A549 (cell line): ENCODE measurements at regions of chr15 and their contacts with region 1.

Region 1: GRCh38 chr15:31128919-31129768 is 27.6 kb upstream of the TRPM1 start:
- DNase-seq: peak; percentile 55 to 62
- ATAC-seq: peak; percentile 90 to 94
- H3K4me3 ChIP-seq: peak overlapping the region; percentile 22; the same call in 1 of the 3 replicates
- H3K27ac ChIP-seq: no peak overlapping the region
- H3K4me1 ChIP-seq: 0 out of 3 replicates have a peak, but pooled peaks cover 3% of the 10 kb centered on the region
- CTCF ChIP-seq: peak; percentile 97
- EP300 ChIP-seq: no peak
- POLR2A ChIP-seq: no peak
- RAD21 ChIP-seq: peak; percentile 96 to 97

Region 2: GRCh38 chr15:30859091-30859874 is 269.9 kb before region 1 on chr15:
- CTCF ChIA-PET with region 1: interaction called, 15 read pairs
- POLR2A ChIA-PET with region 1: no interaction called
- DNase-seq: peak; percentile 41 to 42
- ATAC-seq: peak; percentile 81 to 86
- H3K4me3 ChIP-seq: no peak overlapping the region
- H3K27ac ChIP-seq: no peak overlapping the region
- H3K4me1 ChIP-seq: no peaks in the 10 kb centered on the region
- CTCF ChIP-seq: peak; percentile 71
- EP300 ChIP-seq: no peak
- POLR2A ChIP-seq: no peak
- RAD21 ChIP-seq: peak; percentile 56 to 57

Region 3: DNA sequence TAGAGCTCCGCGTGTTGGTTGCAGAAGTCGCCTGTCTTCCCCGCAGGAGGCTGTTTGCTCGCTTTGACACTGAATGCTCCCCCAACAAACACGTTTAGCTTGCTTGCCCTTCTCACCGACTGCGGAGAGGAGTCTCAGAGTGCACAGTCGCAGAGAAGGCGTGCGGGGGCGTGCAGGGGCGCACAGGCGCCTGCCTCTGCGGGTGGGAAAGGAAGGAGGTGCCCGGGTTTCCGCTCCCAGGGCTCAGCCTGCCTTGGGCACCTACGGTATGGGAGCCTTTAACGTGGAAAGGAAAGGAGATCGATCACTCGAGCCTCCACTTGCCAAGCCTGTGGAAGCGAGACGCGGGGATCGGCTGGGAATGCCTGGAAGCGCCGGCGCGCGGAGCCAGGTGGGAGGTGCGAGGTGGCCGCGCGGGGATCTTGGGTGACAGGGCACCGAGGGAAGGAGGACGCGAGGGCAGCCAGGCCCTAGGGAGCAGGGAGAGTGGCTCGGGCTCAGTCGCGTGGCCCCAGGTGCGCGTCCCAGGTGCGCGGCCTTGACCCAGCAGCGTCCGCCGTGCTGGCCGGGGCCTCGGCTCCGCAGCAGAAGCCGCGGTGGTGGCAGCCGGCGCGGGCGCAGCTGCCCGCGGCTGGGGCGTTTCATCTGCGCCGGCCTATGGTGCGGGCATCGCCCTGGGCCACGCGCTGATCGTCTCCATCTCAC is 225.5 kb before region 1 on chr15 and contains the start of gene FAN1:
- CTCF ChIA-PET with region 1: interaction called, 15 read pairs
- POLR2A ChIA-PET with region 1: interaction called, 3 read pairs
- DNase-seq: peak; percentile 92 to 94
- ATAC-seq: peak; percentile 98 to 99
- H3K4me3 ChIP-seq: peak within 1 kb of the TSS; percentile 62
- H3K27ac ChIP-seq: peak within 1 kb of the TSS; percentile 81 to 93
- H3K4me1 ChIP-seq: peaks cover 5% of the 10 kb centered on the region; the same call in 1 of the 3 replicates
- CTCF ChIP-seq: no peak
- EP300 ChIP-seq: no peak
- POLR2A ChIP-seq: peak; percentile 84
- RAD21 ChIP-seq: peak; percentile 13 to 41; a peak in 2 of 5 replicates
- polyA plus RNA-seq, gene FAN1: 22.1 and 22.2 TPM in 2 replicates

Region 4: DNA sequence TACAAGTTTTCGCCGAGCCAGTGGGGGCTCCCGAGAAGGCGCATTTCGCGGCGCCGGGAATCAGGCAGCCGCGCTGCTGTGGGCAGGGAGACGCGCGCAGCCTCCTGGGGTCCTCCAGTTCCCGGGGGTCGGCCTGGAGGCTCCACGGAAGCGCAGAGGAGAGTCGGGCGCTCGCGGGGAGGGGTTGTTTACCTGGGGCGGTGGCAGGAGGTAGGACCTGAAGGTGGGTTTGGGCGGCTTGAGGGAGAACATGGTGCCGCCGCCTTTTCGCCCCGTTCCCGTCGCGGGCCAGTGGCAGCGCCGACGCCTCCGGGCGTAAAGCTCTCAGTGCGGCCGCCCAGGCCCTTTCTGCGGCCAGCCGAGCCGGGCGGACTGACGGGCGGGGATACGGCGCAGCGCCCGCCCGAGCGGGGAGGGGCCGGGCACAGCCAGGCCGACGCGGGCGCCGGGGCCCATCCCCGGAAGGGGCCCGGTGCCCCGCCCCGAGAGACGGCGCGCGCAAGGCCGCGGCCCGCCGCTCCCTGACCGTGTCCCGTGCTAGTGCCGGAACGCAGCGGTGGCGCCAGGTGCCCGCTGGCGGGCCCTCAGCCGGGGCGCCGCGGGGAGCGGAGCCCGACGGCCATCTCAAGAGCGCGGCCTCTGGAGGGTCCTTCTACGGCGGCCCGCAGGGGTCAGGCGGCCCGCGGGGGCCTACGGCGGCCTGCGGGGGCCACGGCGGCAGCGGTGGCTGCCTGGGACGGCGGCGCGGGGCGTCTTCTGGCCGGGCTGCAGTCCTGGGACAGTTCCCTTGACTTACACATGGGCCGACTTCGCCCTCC is 137.7 kb before region 1 on chr15 and contains the start of gene MTMR10:
- CTCF ChIA-PET with region 1: interaction called, 8 read pairs
- POLR2A ChIA-PET with region 1: interaction called, 17 read pairs
- DNase-seq: peak; percentile 77 to 82
- ATAC-seq: peak; percentile 92 to 95
- H3K4me3 ChIP-seq: peak within 1 kb of the TSS; percentile 78
- H3K27ac ChIP-seq: peak within 1 kb of the TSS; percentile 93 to 96
- H3K4me1 ChIP-seq: peaks cover 30% of the 10 kb centered on the region
- CTCF ChIP-seq: no peak
- EP300 ChIP-seq: no peak
- POLR2A ChIP-seq: peak; percentile 84
- RAD21 ChIP-seq: peak in 1 of 2 experiments; percentile 17; a peak in 2 of 5 replicates
- polyA plus RNA-seq, gene MTMR10: 19.3 and 23.1 TPM in 2 replicates

Region 5: DNA sequence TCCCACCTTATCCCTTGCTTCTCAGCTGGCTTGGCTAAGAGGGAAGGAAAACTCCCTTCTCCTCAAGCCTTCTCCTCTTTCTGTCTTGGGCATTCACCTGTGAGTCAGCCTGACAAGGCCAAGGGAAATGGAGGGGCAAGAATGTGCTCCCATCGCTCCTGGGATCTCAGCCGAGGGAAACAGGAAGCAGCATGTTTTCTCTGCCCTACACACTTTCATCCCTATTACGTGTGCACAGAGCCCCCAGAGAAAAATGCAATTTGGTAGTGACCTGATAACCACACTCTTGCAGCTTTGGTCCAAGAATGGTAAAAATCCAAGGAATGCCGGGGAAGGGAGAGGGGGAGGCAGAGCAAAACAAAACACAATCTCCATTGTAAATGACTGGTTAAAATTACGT is 104.8 kb before region 1 on chr15:
- CTCF ChIA-PET with region 1: interaction called, 11 read pairs
- POLR2A ChIA-PET with region 1: no interaction called
- DNase-seq: peak; percentile 68 to 75
- ATAC-seq: peak; percentile 79 to 89; a peak in 5 of 6 replicates
- H3K4me3 ChIP-seq: no peak overlapping the region
- H3K27ac ChIP-seq: peak overlapping the region; percentile 33 to 67
- H3K4me1 ChIP-seq: peaks cover 18% of the 10 kb centered on the region
- CTCF ChIP-seq: no peak
- EP300 ChIP-seq: no peak
- POLR2A ChIP-seq: no peak
- RAD21 ChIP-seq: peak in 1 of 2 experiments; percentile 2; a peak in 1 of 5 replicates

Region 6: DNA sequence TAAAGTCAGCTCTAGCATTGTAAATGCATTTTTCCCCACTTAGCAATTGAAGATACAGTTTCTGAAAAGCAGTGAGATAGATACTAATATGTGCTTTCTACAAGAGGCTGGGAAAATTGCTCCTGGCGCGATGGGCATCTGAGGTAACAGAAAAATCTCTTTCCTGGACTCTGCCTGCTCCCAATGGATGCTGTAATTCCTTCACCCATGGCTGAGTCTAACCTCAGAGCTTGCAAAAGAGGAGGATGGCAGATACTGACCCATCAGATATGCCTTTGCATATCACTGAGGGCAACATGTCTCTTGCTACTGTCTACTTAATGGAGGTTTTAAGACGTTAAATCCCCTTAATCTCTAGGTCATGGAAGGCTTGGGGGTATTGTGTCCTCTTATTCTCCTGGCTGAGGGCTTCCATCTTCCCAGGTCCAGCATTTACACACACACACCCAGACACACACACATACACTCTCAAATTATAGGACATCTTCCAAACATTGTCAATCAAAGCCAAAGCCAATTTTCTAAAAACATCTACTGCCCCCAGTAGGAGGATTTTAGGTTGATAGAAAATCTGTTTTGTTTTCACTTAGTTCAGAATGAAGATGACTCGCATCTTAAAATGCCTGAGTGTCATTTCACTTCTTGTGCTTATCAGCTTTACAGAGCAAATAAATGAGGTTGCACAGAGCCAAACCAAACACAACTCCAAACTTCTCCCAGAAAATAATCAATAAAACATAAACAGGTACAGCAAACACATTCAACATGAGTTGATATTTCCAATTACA is 30.0 kb before region 1 on chr15:
- CTCF ChIA-PET with region 1: interaction called, 11 read pairs
- POLR2A ChIA-PET with region 1: no interaction called
- DNase-seq: no peak
- ATAC-seq: peak in 1 of 2 experiments; percentile 13; a peak in 3 of 6 replicates
- H3K4me3 ChIP-seq: no peak overlapping the region
- H3K27ac ChIP-seq: no peak overlapping the region
- H3K4me1 ChIP-seq: peaks cover 15% of the 10 kb centered on the region; the same call in 2 of the 3 replicates
- CTCF ChIP-seq: 0 out of 3 replicates have a peak, but pooled peaks have one; percentile 13
- EP300 ChIP-seq: no peak
- POLR2A ChIP-seq: no peak
- RAD21 ChIP-seq: peak; percentile 24 to 33; a peak in 4 of 5 replicates

Region 7: GRCh38 chr15:31145271-31145911 is 16.2 kb after region 1 on chr15:
- CTCF ChIA-PET with region 1: interaction called, 42 read pairs
- POLR2A ChIA-PET with region 1: no interaction called
- DNase-seq: peak in 1 of 2 experiments; percentile 43
- ATAC-seq: no peak
- H3K4me3 ChIP-seq: no peak overlapping the region
- H3K27ac ChIP-seq: no peak overlapping the region
- H3K4me1 ChIP-seq: no peaks in the 10 kb centered on the region
- CTCF ChIP-seq: no peak
- EP300 ChIP-seq: no peak
- POLR2A ChIP-seq: no peak
- RAD21 ChIP-seq: peak in 1 of 2 experiments; percentile 39; a peak in 2 of 5 replicates